ENCODE measurements at regions of chr6 and their contacts with region 1.

Region 1: DNA sequence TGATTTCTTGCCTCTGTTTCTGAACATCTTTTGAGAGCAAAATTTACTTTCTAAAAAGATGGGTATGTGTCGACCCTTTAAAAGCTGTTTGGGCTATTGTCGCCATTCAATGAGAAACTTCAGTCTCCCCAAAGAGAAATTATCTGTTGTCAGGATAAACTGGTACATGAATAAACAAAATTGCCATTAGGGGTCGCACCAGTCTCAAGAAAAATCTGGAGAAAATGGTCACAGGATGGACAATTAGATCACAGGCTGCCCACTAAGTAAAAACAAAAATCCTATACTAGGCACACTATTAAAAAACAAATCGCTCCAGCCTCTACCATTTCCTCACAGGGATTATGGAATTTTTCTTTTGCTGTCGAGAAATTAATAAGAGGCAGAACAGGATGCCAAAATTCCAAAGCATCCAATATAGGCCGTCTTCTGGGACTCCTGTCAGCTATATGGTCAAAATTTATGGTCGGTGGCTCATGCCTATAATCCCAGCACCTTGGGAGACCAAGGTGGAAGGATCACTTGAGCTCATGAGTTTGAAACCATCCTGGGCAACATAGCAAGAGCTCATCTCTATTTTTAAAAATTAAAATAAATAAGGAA is 5.5 kb upstream of the HLA-E start:
- DNase-seq: peak in 1 of 2 experiments; percentile 65
- H3K4me3 ChIP-seq: no peak overlapping the region
- H3K4me3 Mint-ChIP-seq: no peak overlapping the region
- H3K27ac Mint-ChIP-seq: no peak overlapping the region
- H3K4me1 ChIP-seq: peaks cover 16% of the 10 kb centered on the region
- H3K4me1 Mint-ChIP-seq: peaks cover 11% of the 10 kb centered on the region
- H3K27me3 ChIP-seq: peaks cover 4% of the 10 kb centered on the region
- H3K27me3 Mint-ChIP-seq: peaks cover 20% of the 10 kb centered on the region
- CTCF ChIP-seq: peak; percentile 40 to 49

Region 2: GRCh38 chr6:30259140-30260035 is 224.4 kb before region 1 on chr6:
- CTCF ChIA-PET with region 1: no interaction called
- POLR2A ChIA-PET with region 1: no interaction called
- intact Hi-C with region 1: no loop called
- DNase-seq: peak; percentile 78 to 82
- H3K4me3 ChIP-seq: peak overlapping the region; percentile 70
- H3K4me3 Mint-ChIP-seq: peak overlapping the region; percentile 78
- H3K27ac Mint-ChIP-seq: peak overlapping the region; percentile 80
- H3K4me1 ChIP-seq: peaks cover 15% of the 10 kb centered on the region
- H3K4me1 Mint-ChIP-seq: peaks cover 4% of the 10 kb centered on the region
- H3K27me3 ChIP-seq: no peaks in the 10 kb centered on the region
- H3K27me3 Mint-ChIP-seq: peaks cover 9% of the 10 kb centered on the region
- CTCF ChIP-seq: peak in 1 of 2 experiments; percentile 26

Region 3: DNA sequence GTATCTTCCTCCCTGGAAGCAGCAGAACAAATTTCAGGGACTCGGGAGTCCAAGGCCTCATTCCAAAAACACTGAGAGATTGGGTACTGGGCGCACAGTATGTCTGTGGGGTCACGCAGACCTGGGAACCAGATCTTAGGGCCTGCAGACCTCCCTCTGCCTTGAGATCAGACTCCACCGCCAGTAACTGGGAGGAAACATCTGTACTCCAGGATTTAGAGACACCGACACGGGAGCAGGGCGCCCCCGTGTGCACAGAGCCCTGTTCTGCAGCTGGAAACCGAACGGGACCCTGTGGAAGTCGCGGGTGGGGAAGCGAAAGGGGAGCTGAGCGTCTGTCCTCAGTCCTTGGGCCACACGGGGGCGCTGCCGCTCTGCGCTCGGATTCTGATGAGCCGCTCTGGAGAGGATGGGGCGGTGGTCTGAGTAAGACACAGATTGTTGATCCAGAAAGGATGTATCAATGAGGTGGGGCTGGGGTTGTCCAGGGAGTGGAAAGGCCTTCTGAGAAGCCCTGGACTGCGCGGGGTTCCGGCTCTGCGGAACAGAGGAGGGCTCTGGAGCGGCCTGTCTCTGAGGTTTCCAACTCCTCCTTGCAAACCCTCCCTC is 30.2 kb before region 1 on chr6:
- CTCF ChIA-PET with region 1: interaction called, 10 read pairs
- POLR2A ChIA-PET with region 1: no interaction called
- intact Hi-C with region 1: no loop called
- DNase-seq: peak; percentile 80 to 85
- H3K4me3 ChIP-seq: no peak overlapping the region
- H3K4me3 Mint-ChIP-seq: no peak overlapping the region
- H3K27ac Mint-ChIP-seq: no peak overlapping the region
- H3K4me1 ChIP-seq: no peaks in the 10 kb centered on the region
- H3K4me1 Mint-ChIP-seq: no peaks in the 10 kb centered on the region
- H3K27me3 ChIP-seq: no peaks in the 10 kb centered on the region
- H3K27me3 Mint-ChIP-seq: peaks cover 32% of the 10 kb centered on the region
- CTCF ChIP-seq: peak; percentile 87 to 88

Region 4: GRCh38 chr6:30533460-30534294 is 49.9 kb after region 1 on chr6:
- CTCF ChIA-PET with region 1: interaction called, 13 read pairs
- POLR2A ChIA-PET with region 1: no interaction called
- intact Hi-C with region 1: loop called (anchors 1 kb)
- DNase-seq: no peak
- H3K4me3 ChIP-seq: no peak overlapping the region
- H3K4me3 Mint-ChIP-seq: no peak overlapping the region
- H3K27ac Mint-ChIP-seq: no peak overlapping the region
- H3K4me1 ChIP-seq: peaks cover 4% of the 10 kb centered on the region
- H3K4me1 Mint-ChIP-seq: peaks cover 7% of the 10 kb centered on the region
- H3K27me3 ChIP-seq: no peaks in the 10 kb centered on the region
- H3K27me3 Mint-ChIP-seq: no peaks in the 10 kb centered on the region
- CTCF ChIP-seq: no peak

Region 5: DNA sequence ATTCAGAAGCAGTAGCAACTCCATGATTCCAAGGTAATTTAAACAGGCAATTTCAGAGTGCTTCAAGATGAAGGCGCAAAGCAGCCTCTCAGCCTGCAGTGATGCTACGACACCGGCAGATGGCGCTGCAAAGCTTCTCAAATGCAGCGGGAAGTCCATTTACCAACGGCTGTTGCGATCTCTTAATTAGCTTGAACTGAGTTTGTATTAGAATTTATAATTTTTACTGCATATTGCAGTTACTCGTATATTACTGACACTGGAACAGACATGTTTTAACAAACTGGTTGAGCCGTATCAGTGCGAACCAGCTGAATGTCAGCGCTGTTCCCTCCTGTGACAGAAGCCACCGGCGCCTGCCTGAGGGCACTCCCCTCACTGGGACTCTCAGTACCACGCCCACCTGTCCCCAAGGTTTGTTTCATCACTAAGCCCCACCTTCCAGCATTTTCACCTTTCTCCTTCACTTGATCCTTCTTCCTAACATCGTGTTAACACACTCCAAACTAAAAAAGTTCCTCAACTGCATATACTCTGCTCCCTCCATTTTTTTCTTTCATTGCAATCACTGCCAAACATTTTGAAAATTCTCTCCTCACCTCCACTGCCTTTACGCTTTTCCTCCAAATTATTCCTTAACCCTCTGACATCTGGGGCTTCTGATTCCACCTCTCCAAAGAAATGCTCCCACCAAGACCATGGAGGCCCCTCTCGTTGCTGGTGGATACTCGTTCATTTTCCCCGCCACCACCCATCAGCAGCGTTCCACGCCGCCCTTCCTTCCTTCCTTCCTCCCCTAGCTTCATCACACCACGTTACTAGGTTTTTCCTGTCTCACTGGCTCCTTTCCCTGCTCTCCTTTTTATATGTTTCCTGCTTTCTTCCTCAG is 58.0 kb after region 1 on chr6:
- CTCF ChIA-PET with region 1: interaction called, 60 read pairs
- POLR2A ChIA-PET with region 1: no interaction called
- intact Hi-C with region 1: loop called (anchors 1 kb)
- DNase-seq: peak; percentile 75
- H3K4me3 ChIP-seq: peak overlapping the region; percentile 32
- H3K4me3 Mint-ChIP-seq: peak overlapping the region; percentile 69
- H3K27ac Mint-ChIP-seq: peak overlapping the region; percentile 4
- H3K4me1 ChIP-seq: no peaks in the 10 kb centered on the region
- H3K4me1 Mint-ChIP-seq: peaks cover 16% of the 10 kb centered on the region
- H3K27me3 ChIP-seq: no peaks in the 10 kb centered on the region
- H3K27me3 Mint-ChIP-seq: no peaks in the 10 kb centered on the region
- CTCF ChIP-seq: peak; percentile 90 to 97

Region 6: DNA sequence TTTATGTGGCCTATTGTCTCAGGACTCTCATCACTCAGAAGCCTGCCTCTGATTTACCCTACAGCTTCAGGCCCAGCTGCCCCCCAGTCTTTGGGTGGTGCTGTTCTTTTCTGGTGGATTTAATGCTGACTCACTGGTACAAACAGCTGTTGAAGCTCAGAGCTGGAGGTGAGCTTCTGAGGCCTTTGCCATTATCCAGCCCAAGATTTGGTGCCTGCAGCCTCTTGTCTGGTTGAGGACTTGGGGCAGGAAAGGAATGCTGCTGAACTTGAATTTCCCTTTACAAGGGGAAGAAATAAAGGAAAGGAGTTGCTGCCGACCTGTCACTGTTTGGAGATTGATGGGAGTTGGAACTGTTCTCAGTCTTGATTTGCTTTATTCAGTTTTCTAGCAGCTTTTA is 107.2 kb after region 1 on chr6:
- CTCF ChIA-PET with region 1: interaction called, 4 read pairs
- POLR2A ChIA-PET with region 1: no interaction called
- intact Hi-C with region 1: loop called (anchors 2 kb)
- DNase-seq: peak; percentile 57 to 61
- H3K4me3 ChIP-seq: no peak overlapping the region
- H3K4me3 Mint-ChIP-seq: no peak overlapping the region
- H3K27ac Mint-ChIP-seq: peak overlapping the region; percentile 31
- H3K4me1 ChIP-seq: peaks cover 8% of the 10 kb centered on the region
- H3K4me1 Mint-ChIP-seq: peaks cover 6% of the 10 kb centered on the region
- H3K27me3 ChIP-seq: no peaks in the 10 kb centered on the region
- H3K27me3 Mint-ChIP-seq: no peaks in the 10 kb centered on the region
- CTCF ChIP-seq: no peak

Region 7: DNA sequence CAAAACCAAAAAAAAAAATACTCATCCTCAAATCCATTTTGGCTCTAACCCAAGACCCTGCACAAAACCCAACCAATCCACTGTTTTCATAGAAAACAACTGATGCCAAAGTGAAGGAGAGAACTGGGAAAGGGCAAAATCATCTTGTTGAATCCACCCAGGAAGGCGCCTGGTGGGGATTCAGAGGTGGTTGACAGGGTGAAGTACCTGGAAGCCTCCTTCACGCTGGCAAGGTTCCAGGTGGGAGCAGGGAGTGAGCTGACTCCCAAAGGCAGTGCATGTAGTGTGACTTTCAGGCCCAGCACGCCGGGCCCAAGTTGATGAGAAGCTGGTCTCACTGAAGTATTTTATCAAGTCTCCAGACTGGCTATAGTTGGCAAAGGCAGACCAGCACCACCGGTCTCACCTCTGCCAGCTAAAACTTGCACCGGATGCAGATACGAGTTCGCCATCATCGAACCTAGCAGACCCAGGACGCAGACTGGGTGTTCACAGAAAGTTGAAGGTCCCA is 116.7 kb after region 1 on chr6:
- CTCF ChIA-PET with region 1: interaction called, 13 read pairs
- POLR2A ChIA-PET with region 1: no interaction called
- intact Hi-C with region 1: loop called (anchors 2 kb)
- DNase-seq: no peak
- H3K4me3 ChIP-seq: no peak overlapping the region
- H3K4me3 Mint-ChIP-seq: no peak overlapping the region
- H3K27ac Mint-ChIP-seq: peak overlapping the region; percentile 53
- H3K4me1 ChIP-seq: no peaks in the 10 kb centered on the region
- H3K4me1 Mint-ChIP-seq: no peaks in the 10 kb centered on the region
- H3K27me3 ChIP-seq: no peaks in the 10 kb centered on the region
- H3K27me3 Mint-ChIP-seq: no peaks in the 10 kb centered on the region
- CTCF ChIP-seq: no peak

Region 8: GRCh38 chr6:30672445-30673253 is 188.9 kb after region 1 on chr6 and contains the start of gene DHX16:
- CTCF ChIA-PET with region 1: no interaction called
- POLR2A ChIA-PET with region 1: no interaction called
- intact Hi-C with region 1: loop called (anchors 5 kb)
- DNase-seq: peak; percentile 96
- H3K4me3 ChIP-seq: peak within 1 kb of the TSS; percentile 85
- H3K4me3 Mint-ChIP-seq: peak within 1 kb of the TSS; percentile 77
- H3K27ac Mint-ChIP-seq: peak within 1 kb of the TSS; percentile 71
- H3K4me1 ChIP-seq: peaks cover 6% of the 10 kb centered on the region
- H3K4me1 Mint-ChIP-seq: peaks cover 5% of the 10 kb centered on the region
- H3K27me3 ChIP-seq: no peaks in the 10 kb centered on the region
- H3K27me3 Mint-ChIP-seq: no peaks in the 10 kb centered on the region
- CTCF ChIP-seq: peak; percentile 80 to 85
- total RNA-seq, gene DHX16: 36.6 and 40.6 TPM in 2 replicates

Region 9: GRCh38 chr6:30742316-30743098 is 258.7 kb after region 1 on chr6 and contains the start of gene FLOT1:
- CTCF ChIA-PET with region 1: no interaction called
- POLR2A ChIA-PET with region 1: no interaction called
- intact Hi-C with region 1: no loop called
- DNase-seq: peak; percentile 96 to 97
- H3K4me3 ChIP-seq: peak within 1 kb of the TSS; percentile 48
- H3K4me3 Mint-ChIP-seq: peak within 1 kb of the TSS; percentile 90
- H3K27ac Mint-ChIP-seq: peak within 1 kb of the TSS; percentile 82
- H3K4me1 ChIP-seq: peaks cover 19% of the 10 kb centered on the region
- H3K4me1 Mint-ChIP-seq: peaks cover 25% of the 10 kb centered on the region
- H3K27me3 ChIP-seq: no peaks in the 10 kb centered on the region
- H3K27me3 Mint-ChIP-seq: no peaks in the 10 kb centered on the region
- CTCF ChIP-seq: no peak
- total RNA-seq, gene FLOT1: 101 and 113 TPM in 2 replicates